Tibial artery (tissue), 4 donors: ENCODE measurements at regions of chr7 and their contacts with region 1.

Region 1: GRCh38 chr7:26200444-26201246 is at the start of gene HNRNPA2B1:
- DNase-seq: peak; percentile 98
- H3K4me3 ChIP-seq: peak within 1 kb of the TSS; percentile 74 to 91
- H3K27ac ChIP-seq: peak within 1 kb of the TSS; percentile 99
- H3K4me1 ChIP-seq: peaks cover 0 to 50% (median 34%) of the 10 kb centered on the region in 4 donors
- H3K27me3 ChIP-seq: no peaks in the 10 kb centered on the region
- CTCF ChIP-seq: peak in 1 of 2 experiments; percentile 31

Region 2: GRCh38 chr7:26853788-26854393 is 653.2 kb after region 1 on chr7:
- intact Hi-C with region 1: loop called (anchors 10 kb)
- DNase-seq: no peak
- H3K4me3 ChIP-seq: no peak overlapping the region
- H3K27ac ChIP-seq: no peak overlapping the region
- H3K4me1 ChIP-seq: no peaks in the 10 kb centered on the region
- H3K27me3 ChIP-seq: peaks cover 0 to 35% of the 10 kb centered on the region in 2 donors
- CTCF ChIP-seq: peak; percentile 46 to 64

Region 3: DNA sequence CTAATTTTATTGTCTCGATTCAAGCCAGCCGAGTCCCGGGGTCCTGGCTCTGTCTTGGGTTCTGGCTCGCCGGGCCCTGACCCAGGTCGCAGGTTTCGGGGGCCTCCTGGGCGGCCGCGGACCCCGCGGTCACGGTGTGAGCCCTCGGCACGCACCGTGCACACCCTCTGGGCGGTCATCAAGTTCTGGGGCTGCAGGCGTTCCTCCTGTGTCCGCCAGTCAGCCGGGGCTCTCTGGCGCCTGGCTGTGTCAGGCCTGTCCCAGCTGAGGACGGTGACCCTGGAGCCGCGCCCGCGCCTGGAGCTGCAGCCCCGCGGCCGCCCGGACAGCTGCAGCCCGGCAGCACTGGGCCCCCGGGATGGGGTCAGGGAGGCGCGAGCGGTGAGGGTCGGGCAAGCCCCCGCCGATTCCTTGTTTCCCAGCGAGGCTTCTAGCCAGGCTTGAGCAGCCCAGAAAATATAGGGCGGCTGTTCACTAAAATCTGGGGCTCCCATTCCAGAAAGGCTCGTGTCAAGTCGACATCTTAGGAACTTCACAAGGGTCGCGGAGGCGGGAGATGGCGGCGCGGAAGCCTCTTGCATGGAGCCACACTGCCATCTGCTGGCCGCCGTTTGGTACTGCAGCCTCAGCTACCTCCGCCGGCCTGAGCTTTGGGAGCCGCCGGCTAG is 960.0 kb after region 1 on chr7:
- intact Hi-C with region 1: loop called (anchors 5 kb)
- DNase-seq: peak; percentile 90
- H3K4me3 ChIP-seq: peak overlapping the region; percentile 68 to 91
- H3K27ac ChIP-seq: peak overlapping the region; percentile 82 to 96
- H3K4me1 ChIP-seq: peaks cover 0 to 43% (median 17%) of the 10 kb centered on the region in 4 donors
- H3K27me3 ChIP-seq: no peaks in the 10 kb centered on the region
- CTCF ChIP-seq: peak; percentile 98 to 99

Region 4: GRCh38 chr7:27172823-27173510 is 972.3 kb after region 1 on chr7:
- intact Hi-C with region 1: loop called (anchors 5 kb)
- DNase-seq: peak; percentile 85 to 95
- H3K4me3 ChIP-seq: peak overlapping the region; percentile 68 to 91
- H3K27ac ChIP-seq: peak overlapping the region; percentile 96 to 97
- H3K4me1 ChIP-seq: peaks cover 0 to 37% (median 10%) of the 10 kb centered on the region in 4 donors
- H3K27me3 ChIP-seq: no peaks in the 10 kb centered on the region
- CTCF ChIP-seq: no peak